Adrenal gland (tissue), 19 donors: ENCODE measurements at regions of chr11 and their contacts with region 1.

Region 1: GRCh38 chr11:77127232-77127911 is 674 bp upstream of the MYO7A start:
- DNase-seq: peak; percentile 55 to 81 (median 72)
- H3K4me3 ChIP-seq: peak overlapping the region in 2 of 4 donors; percentile 30 to 69
- H3K27ac ChIP-seq: peak overlapping the region; percentile 4 to 92 (median 84)
- H3K4me1 ChIP-seq: peaks cover 44 to 50% of the 10 kb centered on the region in 2 donors
- H3K27me3 ChIP-seq: no peaks in the 10 kb centered on the region
- CTCF ChIP-seq: peak; percentile 97 to 100 (median 100)
- POLR2A ChIP-seq: no peak

Region 2: GRCh38 chr11:77082838-77083562 is 44.4 kb before region 1 on chr11:
- intact Hi-C with region 1: no loop called
- DNase-seq: peak; percentile 13 to 89 (median 73)
- H3K4me3 ChIP-seq: no peak overlapping the region
- H3K27ac ChIP-seq: peak overlapping the region in 4 of 5 donors; percentile 18 to 95 (median 60)
- H3K4me1 ChIP-seq: peaks cover 21 to 33% of the 10 kb centered on the region in 2 donors
- H3K27me3 ChIP-seq: no peaks in the 10 kb centered on the region
- CTCF ChIP-seq: no peak
- POLR2A ChIP-seq: no peak

Region 3: GRCh38 chr11:77187776-77188632 is 60.6 kb after region 1 on chr11:
- intact Hi-C with region 1: loop called (anchors 2 kb)
- DNase-seq: peak; percentile 83 to 96 (median 92)
- H3K4me3 ChIP-seq: no peak overlapping the region
- H3K27ac ChIP-seq: no peak overlapping the region
- H3K4me1 ChIP-seq: no peaks in the 10 kb centered on the region
- H3K27me3 ChIP-seq: no peaks in the 10 kb centered on the region
- CTCF ChIP-seq: peak; percentile 88 to 96 (median 95)
- POLR2A ChIP-seq: no peak

Region 4: GRCh38 chr11:77547863-77548551 is 420.6 kb after region 1 on chr11:
- intact Hi-C with region 1: loop called in 1 of 2 experiments (anchors 10 kb)
- DNase-seq: peak; percentile 44 to 68 (median 59)
- H3K4me3 ChIP-seq: no peak overlapping the region
- H3K27ac ChIP-seq: peak overlapping the region in 1 of 5 donors; percentile 24
- H3K4me1 ChIP-seq: peaks cover under 1 to 3% of the 10 kb centered on the region in 2 donors
- H3K27me3 ChIP-seq: no peaks in the 10 kb centered on the region
- CTCF ChIP-seq: peak; percentile 63 to 82 (median 75)
- POLR2A ChIP-seq: no peak